Heart left ventricle (tissue), 16 donors: ENCODE measurements at regions of chr7 and their contacts with region 1.

Region 1: GRCh38 chr7:44847508-44847920 is 373 bp downstream of the H2AZ2 start:
- DNase-seq: peak; percentile 89 to 95 (median 89)
- ATAC-seq: peak; percentile 23 to 87 (median 75)
- H3K4me3 ChIP-seq: peak overlapping the region; percentile 52 to 85 (median 70)
- H3K27ac ChIP-seq: peak overlapping the region; percentile 70 to 99 (median 97)
- H3K4me1 ChIP-seq: peaks cover 0 to 46% (median 38%) of the 10 kb centered on the region in 12 donors
- H3K27me3 ChIP-seq: no peaks in the 10 kb centered on the region
- CTCF ChIP-seq: peak; percentile 80 to 99 (median 94)
- POLR2A ChIP-seq: no peak

Region 2: GRCh38 chr7:44490351-44491200 is 356.9 kb before region 1 on chr7 and contains the start of gene NUDCD3:
- intact Hi-C with region 1: loop called in 1 of 10 experiments (anchors 2 kb)
- DNase-seq: peak; percentile 86 to 91 (median 88)
- ATAC-seq: peak; percentile 95 to 98 (median 97)
- H3K4me3 ChIP-seq: peak within 1 kb of the TSS; percentile 55 to 96 (median 90)
- H3K27ac ChIP-seq: peak within 1 kb of the TSS; percentile 84 to 100 (median 98)
- H3K4me1 ChIP-seq: peaks cover 8 to 46% (median 33%) of the 10 kb centered on the region in 12 donors
- H3K27me3 ChIP-seq: peaks cover 0 to 4% (median 0%) of the 10 kb centered on the region in 9 donors
- CTCF ChIP-seq: peak in 5 of 12 donors; percentile 5 to 33 (median 21)
- POLR2A ChIP-seq: peak in 1 of 2 donors; percentile 40
- total RNA-seq, gene NUDCD3: 59.5 to 133 (median 98.7) TPM

Region 3: DNA sequence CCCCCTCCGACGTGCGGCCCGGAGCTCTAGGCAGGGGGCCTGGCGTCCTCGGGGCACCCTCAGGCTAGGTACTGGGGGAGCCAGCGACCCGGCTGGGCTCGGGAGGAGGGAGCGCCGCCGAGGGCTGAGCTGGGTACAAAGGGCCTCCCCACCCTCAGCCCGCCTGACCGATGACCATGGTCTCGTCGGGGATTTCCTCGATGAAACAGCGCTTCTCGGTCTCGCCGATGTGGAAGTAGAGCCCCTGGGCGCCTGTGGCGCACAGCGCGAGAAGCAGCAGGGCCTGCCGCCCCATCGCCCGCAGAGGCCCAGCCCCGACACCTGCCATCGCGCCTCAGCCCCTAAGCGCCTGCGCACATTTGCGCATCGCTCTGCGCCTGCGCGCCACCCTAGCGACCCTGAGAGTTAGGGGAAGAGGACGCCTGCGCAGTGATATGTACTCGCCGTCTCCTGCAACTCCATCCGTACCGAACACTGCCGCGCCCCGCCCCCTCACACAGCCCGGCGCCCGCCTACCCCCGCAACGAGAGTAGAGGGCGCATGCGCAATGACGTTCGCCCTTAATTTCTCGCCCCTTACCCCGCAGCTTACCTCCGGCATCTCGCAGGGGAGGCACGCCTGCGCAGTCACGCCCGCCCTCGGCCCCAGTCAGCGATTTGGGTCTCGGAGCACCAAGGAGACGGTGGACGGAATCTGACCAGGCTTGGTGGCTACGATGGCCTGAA is 265.5 kb before region 1 on chr7 and contains the start of gene TMED4:
- intact Hi-C with region 1: loop called in 9 of 10 experiments (anchors 2 to 5 kb)
- DNase-seq: peak; percentile 100
- ATAC-seq: peak; percentile 98 to 99 (median 98)
- H3K4me3 ChIP-seq: peak within 1 kb of the TSS; percentile 64 to 98 (median 82)
- H3K27ac ChIP-seq: peak within 1 kb of the TSS; percentile 92 to 99 (median 98)
- H3K4me1 ChIP-seq: peaks cover 5 to 29% (median 22%) of the 10 kb centered on the region in 12 donors
- H3K27me3 ChIP-seq: no peaks in the 10 kb centered on the region
- CTCF ChIP-seq: peak in 1 of 12 donors; percentile 11
- POLR2A ChIP-seq: peak in 1 of 2 donors; percentile 80
- total RNA-seq, gene TMED4: 55.4 to 129 (median 68.9) TPM

Region 4: GRCh38 chr7:44587843-44588711 is 259.4 kb before region 1 on chr7:
- intact Hi-C with region 1: loop called (anchors 1 to 5 kb)
- DNase-seq: peak in 1 of 5 donors; percentile 53
- ATAC-seq: peak in 3 of 4 donors; percentile 73 to 81 (median 74)
- H3K4me3 ChIP-seq: no peak overlapping the region
- H3K27ac ChIP-seq: no peak overlapping the region
- H3K4me1 ChIP-seq: peaks cover 0 to 8% (median 2%) of the 10 kb centered on the region in 12 donors
- H3K27me3 ChIP-seq: no peaks in the 10 kb centered on the region
- CTCF ChIP-seq: peak; percentile 41 to 74 (median 67)
- POLR2A ChIP-seq: no peak

Region 5: GRCh38 chr7:44678471-44679179 is 168.9 kb before region 1 on chr7:
- intact Hi-C with region 1: loop called in 1 of 10 experiments (anchors 10 kb)
- DNase-seq: peak in 4 of 5 donors; percentile 50 to 82 (median 60)
- ATAC-seq: peak; percentile 62 to 81 (median 68)
- H3K4me3 ChIP-seq: no peak overlapping the region
- H3K27ac ChIP-seq: peak overlapping the region in 11 of 12 donors; percentile 44 to 78 (median 68)
- H3K4me1 ChIP-seq: peaks cover 0 to 30% (median 17%) of the 10 kb centered on the region in 12 donors
- H3K27me3 ChIP-seq: no peaks in the 10 kb centered on the region
- CTCF ChIP-seq: no peak
- POLR2A ChIP-seq: no peak

Region 6: DNA sequence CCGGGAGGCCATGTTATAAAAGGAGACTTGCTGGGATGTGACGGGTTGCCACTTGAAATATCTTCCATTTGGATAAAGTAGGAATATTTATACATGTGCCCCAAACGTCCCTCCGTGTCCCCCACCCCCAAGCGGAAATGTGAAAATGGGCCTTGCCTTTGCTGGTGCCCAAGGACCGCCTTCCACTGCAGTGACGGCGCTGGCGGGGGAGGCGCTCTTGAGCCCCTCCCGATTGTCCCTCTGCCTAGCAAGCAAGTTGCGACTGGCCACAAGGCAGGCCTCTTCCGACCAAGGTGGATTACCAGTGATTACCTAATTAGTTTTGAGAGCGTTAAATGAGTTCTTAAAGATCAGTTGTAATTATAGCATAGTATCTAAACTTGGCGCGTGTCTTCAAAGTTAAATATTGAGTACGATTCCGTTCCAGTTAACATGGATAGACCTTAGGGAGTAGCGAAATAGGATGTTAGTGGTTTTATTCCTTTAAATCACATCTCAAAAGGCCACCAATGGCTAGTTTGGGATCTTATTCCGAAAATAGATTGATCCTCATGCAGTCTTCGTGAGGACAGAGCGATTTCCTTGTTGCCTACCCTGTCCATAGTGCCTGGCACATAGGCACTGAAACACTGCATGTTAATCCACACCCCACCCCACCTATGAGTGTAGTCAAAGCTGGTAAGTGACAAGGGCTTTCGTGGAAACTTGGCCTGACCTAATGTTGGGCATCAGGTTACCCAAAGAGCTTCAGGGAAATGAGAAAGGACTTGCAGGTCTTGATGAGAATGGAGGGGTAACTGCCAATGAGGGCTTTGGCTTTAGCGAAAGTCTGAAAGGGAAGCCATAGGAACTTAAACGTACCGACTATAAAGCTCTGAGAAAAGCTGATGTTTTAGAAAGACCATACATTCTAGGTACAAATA is 49.9 kb before region 1 on chr7:
- intact Hi-C with region 1: loop called in 6 of 10 experiments (anchors 2 to 5 kb)
- DNase-seq: peak; percentile 91 to 94 (median 92)
- ATAC-seq: peak; percentile 79 to 89 (median 82)
- H3K4me3 ChIP-seq: peak overlapping the region; percentile 60 to 97 (median 80)
- H3K27ac ChIP-seq: peak overlapping the region; percentile 95 to 100 (median 98)
- H3K4me1 ChIP-seq: peaks cover 7 to 35% (median 23%) of the 10 kb centered on the region in 12 donors
- H3K27me3 ChIP-seq: no peaks in the 10 kb centered on the region
- CTCF ChIP-seq: peak in 11 of 12 donors; percentile 21 to 66 (median 53)
- POLR2A ChIP-seq: peak in 1 of 2 donors; percentile 24

Region 7: GRCh38 chr7:44885394-44886317 is 38.1 kb after region 1 on chr7 and contains the start of gene PURB:
- intact Hi-C with region 1: loop called in 2 of 10 experiments (anchors 1 to 5 kb)
- DNase-seq: peak; percentile 94 to 98 (median 96)
- ATAC-seq: peak; percentile 97 to 98 (median 98)
- H3K4me3 ChIP-seq: peak within 1 kb of the TSS; percentile 68 to 99 (median 90)
- H3K27ac ChIP-seq: peak within 1 kb of the TSS; percentile 81 to 99 (median 98)
- H3K4me1 ChIP-seq: peaks cover 5 to 51% (median 42%) of the 10 kb centered on the region in 12 donors
- H3K27me3 ChIP-seq: no peaks in the 10 kb centered on the region
- CTCF ChIP-seq: no peak
- POLR2A ChIP-seq: peak; percentile 87 to 94
- total RNA-seq, gene PURB: 9.8 to 19.4 (median 15.8) TPM